ENCODE measurements at regions of chr13 and their contacts with region 1.

Region 1: GRCh38 chr13:30572859-30573275 is 44.9 kb upstream of the USPL1 start:
- DNase-seq: no peak
- ATAC-seq: no peak
- H3K4me3 ChIP-seq: peak overlapping the region; percentile 50
- H3K27ac ChIP-seq: no peak overlapping the region
- H3K4me1 ChIP-seq: no peaks in the 10 kb centered on the region
- H3K27me3 ChIP-seq: no peaks in the 10 kb centered on the region
- CTCF ChIP-seq: peak; percentile 8

Region 2: GRCh38 chr13:30477346-30478195 is 95.3 kb before region 1 on chr13:
- intact Hi-C with region 1: loop called in 1 of 2 experiments (anchors 10 kb)
- DNase-seq: no peak
- ATAC-seq: peak in 1 of 4 donors; percentile 44
- H3K4me3 ChIP-seq: no peak overlapping the region
- H3K27ac ChIP-seq: no peak overlapping the region
- H3K4me1 ChIP-seq: no peaks in the 10 kb centered on the region
- H3K27me3 ChIP-seq: no peaks in the 10 kb centered on the region
- CTCF ChIP-seq: no peak

Region 3: GRCh38 chr13:30818323-30818960 is 245.6 kb after region 1 on chr13:
- intact Hi-C with region 1: no loop called
- DNase-seq: peak in 1 of 2 donors; percentile 66
- ATAC-seq: peak in 2 of 4 donors; percentile 57 to 80
- H3K4me3 ChIP-seq: no peak overlapping the region
- H3K27ac ChIP-seq: no peak overlapping the region
- H3K4me1 ChIP-seq: no peaks in the 10 kb centered on the region
- H3K27me3 ChIP-seq: no peaks in the 10 kb centered on the region
- CTCF ChIP-seq: no peak

Region 4: DNA sequence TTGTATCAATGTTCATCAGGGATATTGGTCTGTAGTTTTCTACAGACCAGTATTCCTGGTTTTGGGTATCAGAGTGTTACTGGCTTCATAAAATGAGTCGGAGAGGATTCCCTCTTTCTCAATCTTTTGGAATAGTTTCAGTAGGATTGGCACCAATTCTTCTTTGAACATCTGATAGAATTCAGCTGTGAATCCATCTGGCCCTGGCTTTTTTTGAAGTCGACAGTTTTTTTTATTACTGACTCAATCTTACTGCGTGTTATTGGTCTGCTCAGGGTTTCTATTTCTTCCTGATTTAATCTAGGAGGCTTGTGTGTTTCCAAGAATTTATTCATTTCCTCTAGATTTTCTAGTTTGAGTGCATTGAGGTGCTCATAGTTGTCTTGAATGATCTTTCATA is 371.0 kb after region 1 on chr13:
- intact Hi-C with region 1: no loop called
- DNase-seq: no peak
- ATAC-seq: no peak
- H3K4me3 ChIP-seq: no peak overlapping the region
- H3K27ac ChIP-seq: no peak overlapping the region
- H3K4me1 ChIP-seq: no peaks in the 10 kb centered on the region
- H3K27me3 ChIP-seq: no peaks in the 10 kb centered on the region
- CTCF ChIP-seq: no peak

Region 5: DNA sequence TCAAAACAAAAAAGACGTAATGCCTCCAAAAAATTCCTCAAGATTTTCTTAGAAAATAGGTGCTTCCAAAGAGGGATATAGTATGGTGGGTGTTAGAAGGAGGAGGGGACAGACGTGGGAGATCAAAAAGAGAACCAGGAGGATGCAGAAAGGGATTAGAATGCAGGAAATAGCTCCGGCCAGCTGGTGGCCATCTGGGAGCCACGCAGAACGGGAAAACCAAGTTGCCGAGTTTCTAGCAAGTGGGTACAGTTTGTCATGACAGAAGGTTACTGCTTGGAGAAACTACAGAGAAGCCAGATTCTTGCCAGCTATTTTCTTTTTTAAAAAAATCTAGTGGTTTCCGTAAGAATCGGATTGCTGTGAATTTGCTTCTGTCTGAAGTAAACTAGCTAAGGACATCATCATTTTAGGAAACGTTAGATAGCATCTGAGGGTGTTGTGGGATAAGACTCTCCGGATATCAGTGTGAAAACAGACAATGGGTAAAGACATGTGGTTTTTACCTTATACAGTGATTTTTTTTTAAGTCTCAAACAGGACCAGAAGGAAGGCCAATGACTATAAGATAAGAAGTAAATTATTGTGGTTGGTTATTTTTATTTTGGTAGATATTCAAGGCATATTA is 483.9 kb after region 1 on chr13:
- intact Hi-C with region 1: no loop called
- DNase-seq: no peak
- ATAC-seq: no peak
- H3K4me3 ChIP-seq: no peak overlapping the region
- H3K27ac ChIP-seq: no peak overlapping the region
- H3K4me1 ChIP-seq: no peaks in the 10 kb centered on the region
- H3K27me3 ChIP-seq: peaks cover 0 to 17% (median 2%) of the 10 kb centered on the region in 3 donors
- CTCF ChIP-seq: no peak

Measured in psoas muscle (tissue), 8 donors.